ENCODE measurements at regions of chr1 and their contacts with region 1.

Region 1: DNA sequence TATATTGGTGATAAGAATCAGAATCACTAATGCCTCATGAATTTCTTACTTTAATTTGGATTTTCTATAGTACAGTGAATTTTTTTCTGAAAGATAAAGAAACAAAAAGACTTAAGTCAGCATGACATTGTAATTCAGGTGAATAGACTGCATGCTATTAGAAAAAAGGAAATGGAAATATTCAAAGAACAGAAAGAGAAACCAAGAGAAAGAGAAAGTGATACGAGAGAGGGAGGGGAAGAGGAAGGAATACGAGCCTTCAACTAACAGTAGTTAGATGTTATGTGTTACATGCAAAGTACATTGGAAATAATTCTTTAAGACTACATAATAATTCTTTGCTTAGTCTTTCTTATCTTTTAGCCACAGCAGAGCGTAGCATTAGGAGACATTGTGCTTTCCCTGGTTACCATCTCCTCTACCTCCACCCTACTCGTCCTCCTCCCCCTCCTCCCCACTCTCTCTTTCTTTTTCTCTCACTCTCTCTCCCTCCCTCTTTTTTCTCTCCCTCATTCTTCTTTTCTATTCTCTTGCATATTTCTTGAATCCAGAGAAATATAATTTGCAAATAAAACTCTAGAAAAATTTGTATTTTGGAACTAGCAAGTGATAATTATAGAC is 46.4 kb upstream of the ADGRL4 start:
- DNase-seq: no peak
- H3K4me3 Mint-ChIP-seq: peak overlapping the region; percentile 61
- H3K27ac Mint-ChIP-seq: no peak overlapping the region
- H3K4me1 Mint-ChIP-seq: peaks cover 7% of the 10 kb centered on the region
- H3K27me3 Mint-ChIP-seq: peaks cover 2% of the 10 kb centered on the region

Region 2: DNA sequence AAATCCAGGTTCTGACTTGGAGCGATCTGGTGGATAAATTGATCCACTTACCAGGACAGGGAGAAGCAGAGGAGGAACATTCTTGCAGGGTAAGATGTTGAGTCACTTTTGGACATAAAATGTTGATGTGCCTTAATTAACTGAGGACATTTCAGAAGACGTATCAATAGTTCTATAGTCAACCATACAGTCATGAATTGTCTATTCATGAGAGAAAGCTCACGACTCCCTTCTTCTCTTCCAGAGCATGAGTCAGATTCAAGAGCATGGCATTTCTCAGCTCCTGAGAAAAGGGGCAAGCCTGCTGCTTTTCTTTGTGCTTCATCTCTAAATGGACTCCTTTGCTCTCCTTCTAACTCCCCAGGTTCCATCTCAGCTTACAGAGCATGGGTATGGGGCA is 102.1 kb before region 1 on chr1:
- CTCF ChIA-PET with region 1: no interaction called
- intact Hi-C with region 1: no loop called
- DNase-seq: no peak
- H3K4me3 Mint-ChIP-seq: no peak overlapping the region
- H3K27ac Mint-ChIP-seq: no peak overlapping the region
- H3K4me1 Mint-ChIP-seq: no peaks in the 10 kb centered on the region
- H3K27me3 Mint-ChIP-seq: no peaks in the 10 kb centered on the region

Region 3: GRCh38 chr1:79040424-79041082 is 12.4 kb before region 1 on chr1:
- CTCF ChIA-PET with region 1: no interaction called
- intact Hi-C with region 1: loop called (anchors 1 kb)
- DNase-seq: no peak
- H3K4me3 Mint-ChIP-seq: no peak overlapping the region
- H3K27ac Mint-ChIP-seq: peak overlapping the region; percentile 62
- H3K4me1 Mint-ChIP-seq: peaks cover 10% of the 10 kb centered on the region
- H3K27me3 Mint-ChIP-seq: no peaks in the 10 kb centered on the region